GM12878 (cell line): ENCODE measurements at regions of chr12 and their contacts with region 1.

Region 1: GRCh38 chr12:104680066-104680465 is 223.3 kb downstream of the CHST11 start:
- DNase-seq: peak; percentile 51
- ATAC-seq: peak; percentile 72
- H3K4me3 ChIP-seq: no peak overlapping the region
- H3K27ac ChIP-seq: no peak overlapping the region
- H3K4me1 ChIP-seq: peaks cover 44% of the 10 kb centered on the region
- H3K27me3 ChIP-seq: no peaks in the 10 kb centered on the region
- CTCF ChIP-seq: peak; percentile 57 to 75 (median 69); a peak in 5 of 6 replicates
- EP300 ChIP-seq: no peak
- POLR2A ChIP-seq: no peak
- RAD21 ChIP-seq: peak; percentile 90

Region 2: DNA sequence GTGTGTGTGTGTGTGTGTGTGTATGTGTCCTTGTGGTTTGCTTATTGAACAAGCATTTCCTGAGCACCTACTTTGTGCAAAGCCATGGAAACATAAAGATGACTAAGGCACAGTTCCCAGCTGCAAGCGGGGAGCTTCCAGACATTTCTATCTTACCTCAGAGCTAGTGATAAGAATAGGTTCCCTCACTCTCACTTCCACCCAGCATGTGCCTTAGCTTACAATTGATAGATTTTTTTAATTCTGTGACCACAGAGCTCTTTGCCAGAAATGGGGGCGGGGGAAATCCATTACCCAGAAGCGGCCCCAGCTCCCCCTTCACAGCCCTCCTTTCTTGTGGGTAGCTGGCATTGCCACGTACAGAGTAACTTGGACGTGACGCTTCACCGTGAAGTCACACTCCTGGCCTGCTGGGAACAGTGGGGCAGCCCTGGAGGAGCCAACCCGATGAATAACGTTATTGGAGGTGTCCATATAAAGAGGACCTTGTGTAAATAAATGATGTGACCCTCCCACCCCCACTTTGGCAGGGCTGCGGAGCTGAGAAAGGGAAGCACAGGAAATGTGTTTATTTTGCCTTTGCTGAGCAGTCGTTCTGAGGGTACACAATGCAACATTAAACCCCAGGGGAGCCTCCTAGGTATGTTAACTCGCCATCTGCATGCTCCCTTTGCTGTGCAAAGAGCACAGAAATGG is 15.5 kb after region 1 on chr12:
- CTCF ChIA-PET with region 1: interaction called, 5 read pairs
- POLR2A ChIA-PET with region 1: interaction called, 5 read pairs
- RAD21 ChIA-PET with region 1: interaction called, 11 read pairs
- SMC1A ChIA-PET with region 1: interaction called, 47 read pairs
- in situ Hi-C with region 1: no loop called
- intact Hi-C with region 1: no loop called
- DNase-seq: peak; percentile 73
- ATAC-seq: peak; percentile 75
- H3K4me3 ChIP-seq: no peak overlapping the region
- H3K27ac ChIP-seq: peak overlapping the region; percentile 58
- H3K4me1 ChIP-seq: peaks cover 42% of the 10 kb centered on the region
- H3K27me3 ChIP-seq: no peaks in the 10 kb centered on the region
- CTCF ChIP-seq: no peak
- EP300 ChIP-seq: peak; percentile 76 to 78; a peak in 3 of 4 replicates
- POLR2A ChIP-seq: no peak
- RAD21 ChIP-seq: no peak

Region 3: GRCh38 chr12:104877123-104877705 is 197.1 kb after region 1 on chr12:
- CTCF ChIA-PET with region 1: no interaction called
- POLR2A ChIA-PET with region 1: no interaction called
- RAD21 ChIA-PET with region 1: interaction called, 3 read pairs
- SMC1A ChIA-PET with region 1: no interaction called
- in situ Hi-C with region 1: no loop called
- intact Hi-C with region 1: loop called (anchors 2 kb)
- DNase-seq: no peak
- ATAC-seq: peak; percentile 62
- H3K4me3 ChIP-seq: no peak overlapping the region
- H3K27ac ChIP-seq: no peak overlapping the region
- H3K4me1 ChIP-seq: no peaks in the 10 kb centered on the region
- H3K27me3 ChIP-seq: no peaks in the 10 kb centered on the region
- CTCF ChIP-seq: peak; percentile 42 to 64 (median 46); a peak in 5 of 6 replicates
- EP300 ChIP-seq: no peak
- POLR2A ChIP-seq: no peak
- RAD21 ChIP-seq: peak; percentile 87

Region 4: DNA sequence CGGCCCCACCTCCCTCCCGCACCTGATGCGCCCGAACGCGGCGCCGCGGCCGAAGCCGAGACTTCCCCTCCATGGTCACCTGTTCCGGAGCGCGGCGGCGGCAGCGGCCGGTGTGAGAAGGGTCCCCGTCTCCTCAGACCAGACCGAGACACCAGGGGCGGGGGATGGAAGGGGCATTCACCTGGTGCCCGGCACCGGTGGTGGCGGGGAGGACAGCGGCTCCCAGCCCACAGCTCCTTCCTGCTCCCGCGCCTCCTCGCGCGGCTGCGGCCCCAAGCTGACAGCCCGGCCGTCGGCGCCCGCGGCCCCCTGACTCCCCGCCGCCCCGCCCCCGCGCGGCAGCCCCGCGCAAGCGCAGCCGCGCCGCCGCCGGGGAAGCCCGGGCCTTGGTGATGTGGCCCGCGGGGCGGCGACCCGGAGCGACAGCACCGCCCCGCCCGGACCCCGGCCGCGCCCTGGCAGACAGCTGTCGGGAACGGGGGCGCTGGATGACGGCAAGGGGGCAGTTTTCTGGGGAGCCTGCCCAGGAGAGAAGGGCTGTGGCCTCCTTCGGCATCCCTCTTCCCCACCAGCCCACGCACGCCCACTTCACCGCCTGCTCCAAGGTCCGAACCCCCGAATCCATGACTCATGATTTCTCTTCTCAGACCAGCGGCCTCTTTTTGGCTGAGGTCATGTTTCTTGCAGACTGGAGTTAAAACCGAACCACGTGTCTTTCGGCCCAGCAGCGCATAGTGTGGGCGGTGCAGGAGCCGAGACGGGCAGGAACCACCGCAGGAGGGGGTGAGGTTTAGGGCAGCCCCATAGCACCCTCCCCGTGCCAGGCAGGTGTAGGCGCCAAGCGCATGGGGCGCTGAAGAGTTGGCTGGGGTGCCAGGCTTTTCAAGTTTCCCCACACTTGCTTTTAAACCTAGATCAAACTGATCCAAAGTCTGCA is 278.2 kb after region 1 on chr12 and contains the start of gene SLC41A2:
- CTCF ChIA-PET with region 1: interaction called, 3 read pairs
- POLR2A ChIA-PET with region 1: no interaction called
- RAD21 ChIA-PET with region 1: no interaction called
- SMC1A ChIA-PET with region 1: no interaction called
- in situ Hi-C with region 1: no loop called
- intact Hi-C with region 1: loop called (anchors 10 kb)
- DNase-seq: peak; percentile 81
- ATAC-seq: peak; percentile 91
- H3K4me3 ChIP-seq: peak within 1 kb of the TSS; percentile 81
- H3K27ac ChIP-seq: peak within 1 kb of the TSS; percentile 68
- H3K4me1 ChIP-seq: peaks cover 10% of the 10 kb centered on the region
- H3K27me3 ChIP-seq: no peaks in the 10 kb centered on the region
- CTCF ChIP-seq: peak; percentile 22 to 40 (median 32); a peak in 2 of 6 replicates
- EP300 ChIP-seq: 0 out of 4 replicates have a peak, but pooled peaks of 1 of the 2 experiments have one; percentile 26
- POLR2A ChIP-seq: peak; percentile 89
- RAD21 ChIP-seq: peak; percentile 16
- polyA plus RNA-seq, gene SLC41A2: 3.5 to 9.2 TPM